ENCODE measurements at regions of chr1 and their contacts with region 1.

Region 1: DNA sequence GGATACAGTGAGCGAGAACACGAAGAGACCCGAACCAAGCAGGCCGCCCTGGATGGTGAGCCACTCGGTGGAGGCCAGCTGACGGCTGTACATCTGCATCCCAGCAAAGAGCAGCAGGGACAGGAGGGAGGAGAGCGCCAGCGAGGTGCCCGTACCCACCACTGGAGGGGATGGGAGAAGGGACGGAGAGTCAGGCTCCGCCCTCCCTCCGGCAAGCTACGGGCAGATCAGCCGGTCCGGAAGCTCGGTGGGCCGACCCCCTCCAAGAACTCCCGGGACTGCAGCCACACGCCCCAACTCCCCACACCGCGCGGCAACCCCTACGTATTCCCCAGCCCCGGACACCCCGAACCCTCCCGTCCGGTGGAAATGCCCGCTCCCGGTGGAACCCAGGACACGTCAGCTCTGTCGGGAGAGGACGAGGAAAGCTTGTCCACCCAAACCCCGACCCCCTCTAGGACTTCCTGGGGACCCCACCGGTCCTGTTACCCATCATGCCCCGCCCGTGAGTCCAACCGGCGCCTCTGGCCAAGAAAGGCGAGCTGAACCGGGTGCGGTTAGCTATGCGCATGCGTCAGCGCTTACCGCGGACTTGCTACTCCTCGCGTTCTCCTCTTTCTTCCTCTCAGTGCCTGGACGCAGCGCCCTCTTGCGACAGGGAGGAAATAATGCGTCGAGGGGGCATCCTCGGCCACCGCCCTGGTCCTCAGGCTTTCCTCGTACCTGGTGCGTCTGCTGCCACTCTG is at the start of gene KRTCAP2:
- DNase-seq: peak; percentile 96
- H3K4me3 Mint-ChIP-seq: peak within 1 kb of the TSS; percentile 96
- H3K27ac Mint-ChIP-seq: peak within 1 kb of the TSS; percentile 96
- H3K4me1 Mint-ChIP-seq: peaks cover 58% of the 10 kb centered on the region
- H3K27me3 Mint-ChIP-seq: no peaks in the 10 kb centered on the region
- total RNA-seq, gene KRTCAP2: 183 to 308 TPM

Region 2: GRCh38 chr1:154129391-154129970 is 1043.4 kb before region 1 on chr1:
- CTCF ChIA-PET with region 1: no interaction called
- POLR2A ChIA-PET with region 1: no interaction called
- DNase-seq: no peak
- H3K4me3 Mint-ChIP-seq: no peak overlapping the region
- H3K27ac Mint-ChIP-seq: no peak overlapping the region
- H3K4me1 Mint-ChIP-seq: peaks cover 8% of the 10 kb centered on the region
- H3K27me3 Mint-ChIP-seq: no peaks in the 10 kb centered on the region

Region 3: GRCh38 chr1:155084722-155085503 is 88.0 kb before region 1 on chr1:
- CTCF ChIA-PET with region 1: interaction called, 67 read pairs
- POLR2A ChIA-PET with region 1: interaction called, 3 read pairs
- DNase-seq: peak; percentile 94
- H3K4me3 Mint-ChIP-seq: peak overlapping the region; percentile 79
- H3K27ac Mint-ChIP-seq: peak overlapping the region; percentile 89
- H3K4me1 Mint-ChIP-seq: peaks cover 40% of the 10 kb centered on the region
- H3K27me3 Mint-ChIP-seq: peaks cover 34% of the 10 kb centered on the region

Region 4: GRCh38 chr1:155099331-155099730 is 73.6 kb before region 1 on chr1:
- CTCF ChIA-PET with region 1: interaction called, 12 read pairs
- POLR2A ChIA-PET with region 1: no interaction called
- DNase-seq: no peak
- H3K4me3 Mint-ChIP-seq: no peak overlapping the region
- H3K27ac Mint-ChIP-seq: no peak overlapping the region
- H3K4me1 Mint-ChIP-seq: no peaks in the 10 kb centered on the region
- H3K27me3 Mint-ChIP-seq: peaks cover 19% of the 10 kb centered on the region

Region 5: GRCh38 chr1:155135415-155136028 is 37.4 kb before region 1 on chr1 and contains the start of gene SLC50A1:
- CTCF ChIA-PET with region 1: interaction called, 13 read pairs
- POLR2A ChIA-PET with region 1: no interaction called
- DNase-seq: peak; percentile 94
- H3K4me3 Mint-ChIP-seq: peak within 1 kb of the TSS; percentile 98
- H3K27ac Mint-ChIP-seq: peak within 1 kb of the TSS; percentile 98
- H3K4me1 Mint-ChIP-seq: peaks cover 48% of the 10 kb centered on the region
- H3K27me3 Mint-ChIP-seq: no peaks in the 10 kb centered on the region
- total RNA-seq, gene SLC50A1: 37.2 to 42.3 TPM

Region 6: GRCh38 chr1:155185351-155186066 is 12.6 kb after region 1 on chr1:
- CTCF ChIA-PET with region 1: interaction called, 15 read pairs
- POLR2A ChIA-PET with region 1: no interaction called
- DNase-seq: no peak
- H3K4me3 Mint-ChIP-seq: no peak overlapping the region
- H3K27ac Mint-ChIP-seq: no peak overlapping the region
- H3K4me1 Mint-ChIP-seq: peaks cover 9% of the 10 kb centered on the region
- H3K27me3 Mint-ChIP-seq: no peaks in the 10 kb centered on the region

Measured in activated CD4-positive, alpha-beta T cell treated with anti-CD3 and anti-CD28 coated beads, Interleukin-2, amount 10 ng/mL, durations not matched to agents 7 days and 5 days (primary cell).